Ascending aorta (tissue), 2 donors: ENCODE measurements at regions of chr3 and their contacts with region 1.

Region 1: GRCh38 chr3:37024092-37024491 is 30.8 kb downstream of the MLH1 start:
- DNase-seq: no peak
- H3K4me3 ChIP-seq: no peak overlapping the region
- H3K27ac ChIP-seq: no peak overlapping the region
- H3K4me1 ChIP-seq: peaks cover 0 to 10% of the 10 kb centered on the region in 2 donors
- H3K27me3 ChIP-seq: no peaks in the 10 kb centered on the region
- CTCF ChIP-seq: peak; percentile 18 to 48 (median 18)

Region 2: DNA sequence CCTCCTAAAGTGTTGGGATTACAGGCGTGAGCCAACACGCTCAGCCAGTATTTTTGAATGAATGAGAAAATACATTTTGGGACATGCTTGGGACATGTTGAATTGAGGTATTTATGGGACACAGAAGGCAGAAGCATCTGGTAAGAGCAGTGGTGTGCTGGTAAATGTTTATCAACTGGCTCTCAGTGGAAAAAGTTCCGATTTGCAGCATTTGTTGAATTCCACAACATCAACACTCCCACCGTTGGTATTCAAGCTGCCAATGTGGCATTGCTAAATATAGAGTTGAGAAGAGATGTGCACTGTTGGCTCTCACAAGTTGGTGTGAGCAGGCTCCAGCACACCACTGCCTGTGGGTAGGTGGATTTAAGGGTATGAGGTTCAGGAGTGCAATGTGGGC is 186.1 kb after region 1 on chr3:
- intact Hi-C with region 1: loop called (anchors 1 kb)
- DNase-seq: no peak
- H3K4me3 ChIP-seq: no peak overlapping the region
- H3K27ac ChIP-seq: peak overlapping the region in 1 of 2 donors; percentile 14
- H3K4me1 ChIP-seq: no peaks in the 10 kb centered on the region
- H3K27me3 ChIP-seq: no peaks in the 10 kb centered on the region
- CTCF ChIP-seq: no peak

Region 3: DNA sequence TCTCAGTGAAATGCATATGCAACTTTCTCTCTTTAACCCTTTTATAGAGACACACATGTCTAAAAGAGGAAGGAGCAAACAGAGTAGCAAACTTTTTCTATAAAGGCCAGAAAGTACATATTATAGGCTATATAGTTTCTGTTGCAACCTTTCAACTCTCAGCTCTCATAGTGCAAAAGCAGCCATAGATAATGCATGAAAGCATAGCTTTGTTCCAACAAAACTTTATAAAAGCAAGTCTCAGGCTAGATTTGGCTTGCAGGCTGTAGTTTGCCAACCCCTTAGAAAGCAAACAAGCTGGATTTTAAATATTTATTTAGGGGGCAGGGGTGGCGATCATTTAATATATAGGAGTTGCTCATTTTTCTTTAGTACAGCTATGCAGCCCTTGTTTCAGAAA is 343.3 kb after region 1 on chr3:
- intact Hi-C with region 1: no loop called
- DNase-seq: no peak
- H3K4me3 ChIP-seq: no peak overlapping the region
- H3K27ac ChIP-seq: no peak overlapping the region
- H3K4me1 ChIP-seq: no peaks in the 10 kb centered on the region
- H3K27me3 ChIP-seq: no peaks in the 10 kb centered on the region
- CTCF ChIP-seq: no peak